Heart right ventricle (tissue), 16 donors: ENCODE measurements at regions of chr3 and their contacts with region 1.

Region 1: GRCh38 chr3:36457667-36458066 is 77.4 kb downstream of the STAC start:
- DNase-seq: peak; percentile 24 to 49
- ATAC-seq: peak in 6 of 8 donors; percentile 31 to 89 (median 42)
- H3K4me3 ChIP-seq: no peak overlapping the region
- H3K27ac ChIP-seq: no peak overlapping the region
- H3K4me1 ChIP-seq: peaks cover 0 to 7% (median 0%) of the 10 kb centered on the region in 9 donors
- H3K27me3 ChIP-seq: no peaks in the 10 kb centered on the region
- CTCF ChIP-seq: no peak

Region 2: GRCh38 chr3:36393563-36393962 is 64.1 kb before region 1 on chr3:
- intact Hi-C with region 1: loop called in 1 of 10 experiments (anchors 5 kb)
- DNase-seq: no peak
- ATAC-seq: no peak
- H3K4me3 ChIP-seq: no peak overlapping the region
- H3K27ac ChIP-seq: no peak overlapping the region
- H3K4me1 ChIP-seq: no peaks in the 10 kb centered on the region
- H3K27me3 ChIP-seq: no peaks in the 10 kb centered on the region
- CTCF ChIP-seq: no peak

Region 3: GRCh38 chr3:36944012-36944640 is 486.5 kb after region 1 on chr3:
- intact Hi-C with region 1: no loop called
- DNase-seq: peak; percentile 46 to 66
- ATAC-seq: peak; percentile 63 to 86 (median 78)
- H3K4me3 ChIP-seq: peak overlapping the region; percentile 61 to 96 (median 82)
- H3K27ac ChIP-seq: peak overlapping the region; percentile 40 to 90 (median 74)
- H3K4me1 ChIP-seq: peaks cover 0 to 25% (median 14%) of the 10 kb centered on the region in 9 donors
- H3K27me3 ChIP-seq: no peaks in the 10 kb centered on the region
- CTCF ChIP-seq: peak in 3 of 9 donors; percentile 23 to 30 (median 26)